Transverse colon (tissue), 4 donors: ENCODE measurements at regions of chr12 and their contacts with region 1.

Region 1: GRCh38 chr12:122230808-122231207 is 5.0 kb upstream of the DIABLO start:
- DNase-seq: no peak
- H3K4me3 ChIP-seq: no peak overlapping the region
- H3K27ac ChIP-seq: no peak overlapping the region
- H3K4me1 ChIP-seq: peaks cover 5 to 8% (median 7%) of the 10 kb centered on the region in 4 donors
- H3K27me3 ChIP-seq: no peaks in the 10 kb centered on the region
- CTCF ChIP-seq: no peak
- EP300 ChIP-seq: no peak
- POLR2A ChIP-seq: no peak

Region 2: DNA sequence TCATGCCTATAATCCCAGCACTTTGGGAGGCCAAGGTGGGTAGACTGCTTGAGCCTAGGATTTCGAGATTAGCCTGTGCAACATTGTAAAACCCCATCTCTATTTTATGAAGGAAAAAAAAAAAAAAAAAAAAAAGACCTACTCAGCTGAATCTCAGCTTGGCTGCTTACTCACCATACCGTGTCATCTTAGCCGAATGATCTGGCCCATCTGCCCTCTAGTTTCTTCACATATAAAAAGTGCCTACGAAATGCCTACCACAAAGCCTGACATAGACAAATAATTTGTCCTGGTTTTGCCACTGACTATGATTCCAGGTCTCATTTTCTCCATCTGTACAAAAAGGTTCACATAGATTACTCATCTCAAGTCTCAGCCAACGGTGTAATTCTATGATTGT is 15.0 kb before region 1 on chr12:
- in situ Hi-C with region 1: no loop called
- intact Hi-C with region 1: loop called (anchors 1 kb)
- DNase-seq: no peak
- H3K4me3 ChIP-seq: no peak overlapping the region
- H3K27ac ChIP-seq: no peak overlapping the region
- H3K4me1 ChIP-seq: no peaks in the 10 kb centered on the region
- H3K27me3 ChIP-seq: no peaks in the 10 kb centered on the region
- CTCF ChIP-seq: no peak
- EP300 ChIP-seq: no peak
- POLR2A ChIP-seq: no peak